ENCODE measurements at regions of chr6 and their contacts with region 1.

Region 1: DNA sequence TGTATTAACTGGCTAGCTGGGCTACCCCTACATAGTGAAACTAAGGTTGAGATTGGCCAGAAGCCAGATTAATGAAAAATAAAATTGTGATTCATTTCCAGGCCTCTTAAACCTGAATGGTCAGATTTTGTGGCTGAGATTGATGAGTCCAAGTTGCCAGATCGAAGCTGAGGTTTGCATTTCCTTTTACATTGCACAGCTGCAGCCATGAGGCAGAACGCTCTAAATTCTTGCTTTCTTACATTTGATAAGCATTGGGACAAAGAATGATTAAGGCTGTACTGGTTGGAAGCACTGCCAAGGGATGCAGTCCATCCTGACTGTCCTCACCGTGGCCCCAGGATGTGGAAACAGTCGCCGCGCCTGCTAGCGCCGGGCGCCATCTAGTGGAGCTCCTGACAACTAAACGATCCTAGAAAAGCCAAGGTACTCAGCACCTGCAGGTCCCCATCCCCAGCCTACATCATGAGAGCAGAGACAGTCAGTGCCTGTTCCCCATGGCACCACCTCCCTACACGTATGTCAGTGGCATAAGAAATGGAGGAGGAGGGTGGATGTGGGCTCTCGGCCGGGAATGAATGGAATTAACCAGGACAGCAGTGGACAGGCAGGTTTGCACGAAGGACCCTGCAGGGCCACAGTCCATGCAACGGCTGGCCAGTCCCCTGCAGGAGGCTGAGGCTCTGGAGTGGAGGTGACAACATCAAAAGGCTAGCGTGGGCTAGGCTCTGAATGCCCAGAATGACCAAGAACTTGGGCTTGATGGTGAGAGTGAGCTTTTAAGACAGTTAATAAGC is 19.0 kb downstream of the PXDC1 start:
- DNase-seq: peak; percentile 67 to 72
- ATAC-seq: peak; percentile 65 to 84 (median 73)
- H3K4me3 ChIP-seq: no peak overlapping the region
- H3K27ac ChIP-seq: peak overlapping the region in 1 of 10 donors; percentile 6
- H3K4me1 ChIP-seq: peaks cover 0 to 33% (median 13%) of the 10 kb centered on the region in 9 donors
- H3K27me3 ChIP-seq: no peaks in the 10 kb centered on the region
- CTCF ChIP-seq: peak; percentile 76 to 94 (median 87)

Region 2: GRCh38 chr6:2988426-2989331 is 743.9 kb before region 1 on chr6:
- intact Hi-C with region 1: no loop called
- DNase-seq: peak; percentile 90 to 95
- ATAC-seq: peak; percentile 85 to 94 (median 88)
- H3K4me3 ChIP-seq: peak overlapping the region; percentile 59 to 97 (median 75)
- H3K27ac ChIP-seq: peak overlapping the region; percentile 77 to 99 (median 98)
- H3K4me1 ChIP-seq: peaks cover 0 to 34% (median 20%) of the 10 kb centered on the region in 9 donors
- H3K27me3 ChIP-seq: no peaks in the 10 kb centered on the region
- CTCF ChIP-seq: peak; percentile 70 to 93 (median 88)

Region 3: DNA sequence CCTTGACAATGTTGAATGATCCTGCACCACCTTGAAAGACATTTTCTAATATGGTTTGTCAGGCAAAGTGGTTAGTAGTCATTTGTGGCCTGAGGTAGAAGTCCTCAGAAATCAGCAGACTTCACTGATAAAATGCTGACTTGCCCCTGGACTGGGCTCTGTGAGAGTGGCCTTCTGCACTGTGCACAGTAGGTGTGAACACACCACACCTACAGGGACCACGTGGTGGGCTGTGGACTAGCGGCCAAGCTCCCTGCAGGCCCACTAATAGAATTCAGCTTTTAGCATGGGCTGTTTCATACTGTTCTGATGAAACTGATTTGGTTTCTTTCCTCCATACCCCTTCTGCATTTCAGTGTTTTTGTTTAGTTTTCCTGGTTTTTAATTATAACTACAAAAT is 606.7 kb before region 1 on chr6:
- intact Hi-C with region 1: loop called in 6 of 10 experiments (anchors 2 to 10 kb)
- DNase-seq: no peak
- ATAC-seq: no peak
- H3K4me3 ChIP-seq: no peak overlapping the region
- H3K27ac ChIP-seq: peak overlapping the region in 1 of 10 donors; percentile 51
- H3K4me1 ChIP-seq: peaks cover 0 to 12% (median 0%) of the 10 kb centered on the region in 9 donors
- H3K27me3 ChIP-seq: no peaks in the 10 kb centered on the region
- CTCF ChIP-seq: no peak

Region 4: DNA sequence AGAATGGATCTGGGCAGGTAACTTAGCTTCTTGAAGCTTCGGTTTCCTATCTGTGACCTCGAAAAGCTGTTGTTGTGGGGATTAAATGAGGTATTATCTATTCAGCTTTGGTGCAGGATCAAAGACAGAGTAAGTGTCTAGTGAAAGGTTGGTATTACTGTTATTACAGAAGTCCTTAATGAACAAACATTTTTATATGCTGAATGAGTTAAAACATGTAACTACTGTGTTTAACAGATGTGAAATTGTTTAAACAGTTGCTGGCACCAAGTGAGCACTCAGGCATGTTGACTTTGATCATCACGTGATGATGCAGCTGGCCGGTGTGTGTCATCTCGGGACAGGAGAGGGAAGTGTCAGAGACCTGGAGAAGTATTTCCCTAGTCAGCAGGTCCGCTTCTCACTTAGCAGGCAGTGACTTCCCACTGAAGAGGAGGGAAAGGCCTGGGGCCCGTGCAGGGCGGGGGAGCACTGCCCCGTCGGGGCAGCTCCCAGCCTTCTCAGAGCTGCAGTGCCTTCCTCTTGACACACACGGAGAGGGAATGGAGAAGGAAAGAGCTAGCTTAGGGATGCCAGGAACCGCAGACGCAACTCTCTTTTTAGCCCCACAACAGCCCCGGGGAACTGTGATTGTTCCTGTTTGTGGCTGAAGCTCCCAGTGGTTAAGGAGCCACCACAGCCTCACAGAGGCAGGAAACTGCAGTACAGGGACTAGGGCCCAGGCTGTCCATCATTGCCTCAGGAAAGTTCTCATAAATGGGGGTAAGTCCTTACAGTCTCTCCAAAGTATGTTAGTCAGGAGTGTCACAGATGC is 593.2 kb before region 1 on chr6:
- intact Hi-C with region 1: loop called in 1 of 10 experiments (anchors 10 kb)
- DNase-seq: peak; percentile 43 to 50
- ATAC-seq: peak; percentile 80 to 95 (median 91)
- H3K4me3 ChIP-seq: no peak overlapping the region
- H3K27ac ChIP-seq: peak overlapping the region in 9 of 10 donors; percentile 29 to 74 (median 55)
- H3K4me1 ChIP-seq: peaks cover 0 to 29% (median 16%) of the 10 kb centered on the region in 9 donors
- H3K27me3 ChIP-seq: no peaks in the 10 kb centered on the region
- CTCF ChIP-seq: no peak

Region 5: GRCh38 chr6:3403238-3404173 is 329.0 kb before region 1 on chr6:
- intact Hi-C with region 1: loop called in 1 of 10 experiments (anchors 10 kb)
- DNase-seq: no peak
- ATAC-seq: no peak
- H3K4me3 ChIP-seq: no peak overlapping the region
- H3K27ac ChIP-seq: no peak overlapping the region
- H3K4me1 ChIP-seq: peaks cover 0 to 16% (median 5%) of the 10 kb centered on the region in 9 donors
- H3K27me3 ChIP-seq: no peaks in the 10 kb centered on the region
- CTCF ChIP-seq: no peak

Region 6: GRCh38 chr6:3410385-3411360 is 321.9 kb before region 1 on chr6:
- intact Hi-C with region 1: loop called in 6 of 10 experiments (anchors 2 to 10 kb)
- DNase-seq: peak; percentile 19 to 70
- ATAC-seq: peak in 5 of 8 donors; percentile 29 to 64 (median 54)
- H3K4me3 ChIP-seq: no peak overlapping the region
- H3K27ac ChIP-seq: no peak overlapping the region
- H3K4me1 ChIP-seq: peaks cover 0 to 5% (median 0%) of the 10 kb centered on the region in 9 donors
- H3K27me3 ChIP-seq: no peaks in the 10 kb centered on the region
- CTCF ChIP-seq: peak; percentile 39 to 80 (median 70)

Region 7: DNA sequence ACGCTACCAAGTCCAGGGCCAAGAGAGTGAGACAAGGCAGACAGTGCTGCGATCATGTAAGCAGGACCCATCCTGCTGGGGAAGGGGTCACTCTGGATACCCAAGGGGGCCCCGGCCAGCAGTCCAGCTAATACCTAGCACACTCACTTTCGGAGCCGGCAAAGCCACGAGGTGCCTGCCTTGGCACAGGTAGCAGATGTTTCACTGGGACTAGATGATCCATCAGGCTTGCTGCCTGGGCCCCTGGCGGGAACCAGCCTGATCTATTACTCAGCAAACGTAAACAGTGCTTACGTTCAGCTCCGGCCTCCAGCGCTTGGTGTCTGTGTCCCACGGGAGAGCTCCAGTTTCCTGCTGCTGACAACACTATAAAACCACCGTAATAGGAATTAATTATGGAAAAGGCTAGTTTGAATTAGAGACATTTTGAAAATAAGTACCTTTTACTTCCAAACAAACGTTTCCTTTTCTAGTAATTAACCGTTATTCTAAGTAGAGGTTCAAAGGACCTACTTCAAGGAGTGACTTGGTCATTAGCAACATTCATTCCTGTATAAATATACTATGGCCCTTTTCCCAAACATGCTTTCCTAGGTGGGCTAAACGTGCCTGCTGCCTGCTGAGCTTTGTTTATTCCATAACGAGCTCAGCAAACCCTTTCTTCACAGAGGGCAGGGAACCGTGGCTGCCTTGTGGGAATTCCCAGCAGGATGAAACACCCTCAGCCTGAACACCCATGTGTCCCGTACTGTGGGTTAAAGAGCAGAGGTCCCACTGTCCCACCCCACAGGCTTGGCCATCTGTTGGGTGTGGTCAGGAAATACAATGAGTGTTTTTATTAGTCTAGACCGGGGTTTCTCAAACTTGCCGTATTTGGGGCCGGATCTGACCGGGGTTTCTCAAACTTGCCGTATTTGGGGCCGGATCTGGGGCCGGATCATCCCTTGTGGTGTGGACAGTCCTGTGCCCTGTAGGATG is 294.1 kb before region 1 on chr6:
- intact Hi-C with region 1: loop called in 1 of 10 experiments (anchors 10 kb)
- DNase-seq: no peak
- ATAC-seq: peak in 4 of 8 donors; percentile 24 to 62 (median 50)
- H3K4me3 ChIP-seq: no peak overlapping the region
- H3K27ac ChIP-seq: peak overlapping the region in 1 of 10 donors; percentile 29
- H3K4me1 ChIP-seq: peaks cover 0 to 15% (median 0%) of the 10 kb centered on the region in 9 donors
- H3K27me3 ChIP-seq: no peaks in the 10 kb centered on the region
- CTCF ChIP-seq: no peak

Region 8: DNA sequence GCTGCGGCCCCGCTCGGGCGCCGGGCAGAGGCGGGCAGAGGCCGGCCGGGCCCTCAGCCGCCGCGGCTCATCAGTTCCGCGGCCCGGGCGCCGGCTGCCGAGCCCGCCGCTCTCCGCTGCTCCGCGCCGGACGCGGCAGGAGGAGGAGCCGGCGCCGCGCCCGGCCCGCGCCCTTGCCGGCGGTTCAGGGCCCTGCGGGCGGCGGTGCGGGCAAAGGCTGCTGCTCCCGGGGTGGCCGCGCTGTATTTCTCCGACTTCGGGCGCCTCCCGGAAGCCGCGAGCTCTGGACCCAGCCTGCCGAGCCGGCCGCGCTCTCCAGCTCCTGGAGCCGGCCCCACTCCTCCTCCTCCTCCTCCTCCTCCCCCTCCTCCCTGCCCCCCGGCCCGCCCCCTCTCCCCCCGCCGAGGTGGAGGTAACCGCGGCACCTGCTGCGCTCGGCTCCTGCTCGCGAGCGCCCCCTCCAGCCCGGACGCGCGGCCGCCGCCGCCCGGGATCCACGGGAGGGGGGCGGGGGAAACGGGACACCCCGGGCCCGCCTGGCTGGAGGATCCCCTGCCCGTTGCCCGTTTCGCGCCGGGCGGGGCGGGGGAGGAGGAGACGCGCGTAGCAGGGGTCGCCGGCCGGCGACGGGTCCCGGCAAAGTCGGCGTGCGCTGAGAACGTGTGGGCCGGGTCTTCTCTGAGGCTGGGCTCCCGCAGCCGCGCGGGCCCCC is 275.6 kb before region 1 on chr6 and contains the start of gene SLC22A23:
- intact Hi-C with region 1: loop called in 3 of 10 experiments (anchors 10 kb)
- DNase-seq: peak; percentile 53 to 76
- ATAC-seq: peak; percentile 77 to 90 (median 80)
- H3K4me3 ChIP-seq: peak within 1 kb of the TSS; percentile 23 to 72 (median 68)
- H3K27ac ChIP-seq: peak within 1 kb of the TSS; percentile 25 to 67 (median 49)
- H3K4me1 ChIP-seq: peaks cover 11 to 43% (median 25%) of the 10 kb centered on the region in 9 donors
- H3K27me3 ChIP-seq: peaks cover 0 to 87% (median 14%) of the 10 kb centered on the region in 7 donors
- CTCF ChIP-seq: peak; percentile 62 to 81 (median 77)
- total RNA-seq, gene SLC22A23: 4.4 to 7.8 (median 5.5) TPM

Region 9: GRCh38 chr6:3669916-3670315 is 62.6 kb before region 1 on chr6:
- intact Hi-C with region 1: no loop called
- DNase-seq: no peak
- ATAC-seq: no peak
- H3K4me3 ChIP-seq: no peak overlapping the region
- H3K27ac ChIP-seq: no peak overlapping the region
- H3K4me1 ChIP-seq: no peaks in the 10 kb centered on the region
- H3K27me3 ChIP-seq: peaks cover 0 to 5% (median 0%) of the 10 kb centered on the region in 7 donors
- CTCF ChIP-seq: no peak

Region 10: DNA sequence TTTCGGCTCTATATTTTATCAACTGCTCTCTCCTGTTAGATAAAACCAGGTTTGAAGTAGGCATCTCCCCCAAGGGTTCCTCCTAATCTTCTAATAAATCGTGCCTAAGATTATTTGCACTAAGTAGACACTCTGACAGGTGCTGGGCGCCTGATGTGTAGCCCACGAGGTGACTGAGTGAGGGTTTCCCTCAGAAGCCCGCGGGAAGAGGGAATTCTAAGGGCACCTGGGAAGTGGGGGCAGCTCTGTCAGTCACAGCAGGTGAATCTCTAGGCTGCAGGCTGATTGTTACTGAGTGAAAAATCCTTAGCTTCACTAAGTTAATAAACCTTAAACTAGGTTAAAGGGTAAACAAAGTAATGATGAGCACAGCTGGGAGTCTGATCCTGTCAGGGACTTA is 49.2 kb before region 1 on chr6:
- intact Hi-C with region 1: no loop called
- DNase-seq: no peak
- ATAC-seq: no peak
- H3K4me3 ChIP-seq: no peak overlapping the region
- H3K27ac ChIP-seq: no peak overlapping the region
- H3K4me1 ChIP-seq: no peaks in the 10 kb centered on the region
- H3K27me3 ChIP-seq: no peaks in the 10 kb centered on the region
- CTCF ChIP-seq: no peak